ENCODE measurements at regions of chr9 and their contacts with region 1.

Region 1: DNA sequence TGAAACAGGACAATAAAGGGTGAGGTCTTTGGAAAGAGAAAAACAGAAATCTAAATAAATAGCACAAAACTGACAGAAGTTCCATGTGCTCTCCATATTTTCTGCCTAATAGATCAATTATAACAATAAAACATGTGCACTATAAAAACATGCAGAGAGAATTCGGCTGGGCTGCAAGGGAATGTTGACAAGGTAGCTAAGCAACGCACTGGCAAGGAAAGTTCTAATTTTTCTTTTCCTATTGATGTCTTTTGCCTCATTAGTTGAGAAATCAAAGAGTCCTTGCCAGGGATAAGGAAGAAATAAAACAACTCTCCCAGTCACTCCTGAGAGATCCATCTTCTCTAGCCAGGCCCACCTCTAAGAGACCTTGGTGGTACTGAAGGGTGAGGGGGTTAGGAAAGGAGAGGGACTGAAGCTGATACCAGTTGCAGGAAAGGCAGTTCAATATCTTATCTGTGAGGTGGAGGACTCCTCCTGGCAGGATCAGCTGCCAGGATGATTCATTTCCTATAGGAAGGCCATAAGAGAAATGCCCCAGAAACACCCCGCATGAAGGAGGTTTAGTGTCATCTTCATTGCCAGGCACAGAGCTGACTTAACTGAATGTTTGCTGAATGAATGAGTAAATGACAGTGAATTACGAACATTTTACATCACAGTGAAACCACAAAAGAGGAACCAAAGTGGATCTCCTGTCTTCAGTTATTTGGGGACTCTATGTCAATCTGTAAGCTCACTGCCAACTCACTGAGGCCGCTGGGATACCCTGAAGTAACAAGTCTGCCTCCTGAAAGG is 63.7 kb upstream of the IFNK start:
- DNase-seq: no peak
- H3K4me3 Mint-ChIP-seq: no peak overlapping the region
- H3K27ac Mint-ChIP-seq: no peak overlapping the region
- H3K4me1 Mint-ChIP-seq: peaks cover 19% of the 10 kb centered on the region
- H3K27me3 Mint-ChIP-seq: no peaks in the 10 kb centered on the region
- CTCF ChIP-seq: no peak

Region 2: GRCh38 chr9:27499481-27499880 is 39.1 kb after region 1 on chr9:
- CTCF ChIA-PET with region 1: no interaction called
- intact Hi-C with region 1: loop called (anchors 5 kb)
- DNase-seq: no peak
- H3K4me3 Mint-ChIP-seq: no peak overlapping the region
- H3K27ac Mint-ChIP-seq: no peak overlapping the region
- H3K4me1 Mint-ChIP-seq: no peaks in the 10 kb centered on the region
- H3K27me3 Mint-ChIP-seq: no peaks in the 10 kb centered on the region
- CTCF ChIP-seq: no peak

Measured in Calu3 (cell line).